ENCODE measurements at regions of chr10 and their contacts with region 1.

Region 1: GRCh38 chr10:114083040-114083439 is 39.4 kb downstream of the ADRB1 start:
- DNase-seq: no peak
- ATAC-seq: no peak
- H3K4me3 ChIP-seq: no peak overlapping the region
- H3K27ac ChIP-seq: no peak overlapping the region
- H3K4me1 ChIP-seq: no peaks in the 10 kb centered on the region
- H3K27me3 ChIP-seq: no peaks in the 10 kb centered on the region
- CTCF ChIP-seq: no peak
- POLR2A ChIP-seq: no peak

Region 2: GRCh38 chr10:113922787-113923570 is 160.1 kb before region 1 on chr10:
- intact Hi-C with region 1: loop called in 1 of 10 experiments (anchors 10 kb)
- DNase-seq: peak in 2 of 5 donors; percentile 28 to 40
- ATAC-seq: peak in 3 of 4 donors; percentile 57 to 62 (median 57)
- H3K4me3 ChIP-seq: no peak overlapping the region
- H3K27ac ChIP-seq: no peak overlapping the region
- H3K4me1 ChIP-seq: peaks cover 0 to 12% (median 0%) of the 10 kb centered on the region in 12 donors
- H3K27me3 ChIP-seq: no peaks in the 10 kb centered on the region
- CTCF ChIP-seq: peak in 2 of 12 donors; percentile 32 to 37
- POLR2A ChIP-seq: no peak

Measured in heart left ventricle (tissue), 16 donors.